ENCODE measurements at regions of chr16 and their contacts with region 1.

Region 1: GRCh38 chr16:50210266-50211038 is 55.9 kb upstream of the ADCY7 start:
- DNase-seq: peak; percentile 53 to 63 (median 56)
- H3K4me3 ChIP-seq: no peak overlapping the region
- H3K4me3 Mint-ChIP-seq: no peak overlapping the region
- H3K27ac ChIP-seq: no peak overlapping the region
- H3K27ac Mint-ChIP-seq: peak overlapping the region; percentile 17 to 91 (median 59)
- H3K4me1 ChIP-seq: peaks cover 4% of the 10 kb centered on the region
- H3K4me1 Mint-ChIP-seq: peaks cover 16 to 26% (median 26%) of the 10 kb centered on the region in 4 donors
- H3K27me3 ChIP-seq: no peaks in the 10 kb centered on the region
- H3K27me3 Mint-ChIP-seq: no peaks in the 10 kb centered on the region

Region 2: DNA sequence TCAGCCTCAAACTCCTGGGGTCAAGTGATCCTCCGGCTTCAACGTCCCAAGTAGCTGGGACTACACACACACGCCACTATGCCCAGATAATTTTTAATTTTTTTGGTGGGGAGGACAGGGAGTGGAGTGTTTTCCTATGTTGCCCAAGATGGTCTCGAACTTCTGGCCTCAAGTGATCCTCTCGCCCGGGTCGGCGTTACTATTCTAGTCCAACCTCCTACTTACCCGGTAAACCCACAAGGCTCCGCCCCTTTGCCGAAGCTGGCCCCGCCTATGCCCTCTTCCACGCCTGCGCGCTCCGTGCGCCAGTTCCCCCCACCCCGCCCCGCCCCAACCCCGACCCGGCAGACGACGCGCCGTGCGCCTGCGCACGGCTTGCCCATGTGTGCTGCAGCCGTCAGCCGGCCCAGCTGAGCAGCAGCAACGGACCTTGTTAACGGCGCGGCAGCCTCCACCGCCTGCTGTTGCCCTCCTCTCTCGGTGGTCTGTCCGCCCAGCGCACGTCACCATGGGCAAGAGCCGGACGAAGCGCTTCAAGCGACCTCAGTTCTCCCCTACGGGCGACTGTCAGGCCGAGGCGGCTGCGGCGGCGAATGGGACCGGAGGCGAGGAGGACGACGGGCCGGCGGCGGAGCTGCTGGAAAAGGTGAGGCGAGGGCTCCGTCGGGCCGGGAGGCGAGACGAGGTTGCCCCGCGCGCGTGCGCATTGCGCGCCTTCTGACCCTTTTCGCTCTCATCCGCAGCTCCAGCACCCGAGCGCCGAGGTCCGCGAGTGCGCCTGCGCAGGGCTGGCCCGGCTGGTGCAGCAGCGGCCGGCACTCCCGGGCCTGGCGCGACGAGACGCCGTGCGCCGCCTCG is 144.6 kb before region 1 on chr16 and contains the start of gene HEATR3:
- CTCF ChIA-PET with region 1: interaction called, 22 read pairs
- POLR2A ChIA-PET with region 1: no interaction called
- intact Hi-C with region 1: loop called (anchors 5 kb)
- DNase-seq: peak; percentile 89 to 92 (median 91)
- H3K4me3 ChIP-seq: peak within 1 kb of the TSS; percentile 82 to 98
- H3K4me3 Mint-ChIP-seq: peak within 1 kb of the TSS; percentile 90 to 97 (median 93)
- H3K27ac ChIP-seq: peak within 1 kb of the TSS; percentile 79
- H3K27ac Mint-ChIP-seq: peak within 1 kb of the TSS; percentile 77 to 96 (median 94)
- H3K4me1 ChIP-seq: peaks cover 33% of the 10 kb centered on the region
- H3K4me1 Mint-ChIP-seq: peaks cover 28 to 47% (median 35%) of the 10 kb centered on the region in 4 donors
- H3K27me3 ChIP-seq: no peaks in the 10 kb centered on the region
- H3K27me3 Mint-ChIP-seq: no peaks in the 10 kb centered on the region
- total RNA-seq, gene HEATR3: 20.5 to 25.6 TPM

Region 3: GRCh38 chr16:50185005-50185505 is 25.4 kb before region 1 on chr16:
- CTCF ChIA-PET with region 1: interaction called, 10 read pairs
- POLR2A ChIA-PET with region 1: no interaction called
- intact Hi-C with region 1: no loop called
- DNase-seq: no peak
- H3K4me3 ChIP-seq: no peak overlapping the region
- H3K4me3 Mint-ChIP-seq: no peak overlapping the region
- H3K27ac ChIP-seq: no peak overlapping the region
- H3K27ac Mint-ChIP-seq: peak overlapping the region in 3 of 7 donors; percentile 13 to 49 (median 45)
- H3K4me1 ChIP-seq: peaks cover 25% of the 10 kb centered on the region
- H3K4me1 Mint-ChIP-seq: peaks cover 41 to 73% (median 55%) of the 10 kb centered on the region in 4 donors
- H3K27me3 ChIP-seq: no peaks in the 10 kb centered on the region
- H3K27me3 Mint-ChIP-seq: no peaks in the 10 kb centered on the region

Region 4: GRCh38 chr16:50266337-50267091 is 56.1 kb after region 1 on chr16 and contains the start of gene ADCY7:
- CTCF ChIA-PET with region 1: interaction called, 4 read pairs
- POLR2A ChIA-PET with region 1: interaction called, 3 read pairs
- intact Hi-C with region 1: loop called (anchors 5 kb)
- DNase-seq: peak; percentile 77 to 92 (median 80)
- H3K4me3 ChIP-seq: peak within 1 kb of the TSS; percentile 75 to 76
- H3K4me3 Mint-ChIP-seq: peak within 1 kb of the TSS; percentile 93 to 99 (median 98)
- H3K27ac ChIP-seq: peak within 1 kb of the TSS; percentile 81
- H3K27ac Mint-ChIP-seq: peak within 1 kb of the TSS; percentile 95 to 99 (median 98)
- H3K4me1 ChIP-seq: peaks cover 60% of the 10 kb centered on the region
- H3K4me1 Mint-ChIP-seq: peaks cover 40 to 84% (median 56%) of the 10 kb centered on the region in 4 donors
- H3K27me3 ChIP-seq: no peaks in the 10 kb centered on the region
- H3K27me3 Mint-ChIP-seq: no peaks in the 10 kb centered on the region
- total RNA-seq, gene ADCY7: 230 to 235 TPM

Region 5: DNA sequence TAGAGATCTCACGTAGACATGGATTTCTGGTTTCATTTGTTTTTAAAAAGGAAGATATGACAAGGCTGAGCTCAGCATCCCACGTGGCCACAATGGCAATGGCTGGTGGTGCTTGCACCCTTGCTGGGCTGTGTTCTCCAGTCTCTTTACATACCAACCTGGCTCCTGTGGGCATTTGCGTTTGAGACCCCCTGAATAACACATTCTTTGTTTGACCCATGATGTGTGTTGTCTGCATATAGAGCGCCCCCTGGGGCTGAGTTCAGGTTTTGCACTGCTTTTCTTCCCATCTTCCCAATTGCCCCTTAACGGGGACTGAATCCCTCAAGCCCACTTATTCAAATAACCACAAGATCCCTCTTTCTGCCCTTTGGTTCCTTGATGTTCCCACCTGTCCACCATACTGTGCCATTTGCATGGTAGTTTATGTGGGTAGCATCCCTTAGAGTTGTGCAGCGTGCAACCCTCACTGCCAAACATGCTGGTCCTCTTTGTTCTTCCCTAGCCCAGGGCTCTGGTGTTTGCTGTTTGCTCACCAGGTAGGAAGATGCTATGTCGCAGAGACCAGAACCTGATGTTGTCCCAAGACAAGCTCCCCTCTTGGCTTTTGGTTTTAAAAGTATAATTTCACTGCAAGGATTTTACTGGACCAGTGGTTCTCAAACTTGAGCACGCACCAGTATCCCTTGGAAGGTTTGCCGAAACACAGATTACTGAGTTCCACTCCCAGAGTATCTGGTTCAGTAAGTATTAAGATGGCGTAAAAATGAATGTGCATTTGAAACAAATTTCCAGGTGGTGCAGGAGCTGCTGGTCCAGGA is 299.3 kb after region 1 on chr16:
- CTCF ChIA-PET with region 1: interaction called, 7 read pairs
- POLR2A ChIA-PET with region 1: no interaction called
- intact Hi-C with region 1: loop called (anchors 1 kb)
- DNase-seq: peak in 4 of 5 donors; percentile 4 to 31 (median 20)
- H3K4me3 ChIP-seq: no peak overlapping the region
- H3K4me3 Mint-ChIP-seq: no peak overlapping the region
- H3K27ac ChIP-seq: no peak overlapping the region
- H3K27ac Mint-ChIP-seq: peak overlapping the region in 1 of 7 donors; percentile 72
- H3K4me1 ChIP-seq: no peaks in the 10 kb centered on the region
- H3K4me1 Mint-ChIP-seq: peaks cover 0 to 5% (median 1%) of the 10 kb centered on the region in 4 donors
- H3K27me3 ChIP-seq: no peaks in the 10 kb centered on the region
- H3K27me3 Mint-ChIP-seq: peaks cover 1 to 3% of the 10 kb centered on the region in 2 donors